HepG2 (cell line): ENCODE measurements at regions of chr17 and their contacts with region 1.

Region 1: DNA sequence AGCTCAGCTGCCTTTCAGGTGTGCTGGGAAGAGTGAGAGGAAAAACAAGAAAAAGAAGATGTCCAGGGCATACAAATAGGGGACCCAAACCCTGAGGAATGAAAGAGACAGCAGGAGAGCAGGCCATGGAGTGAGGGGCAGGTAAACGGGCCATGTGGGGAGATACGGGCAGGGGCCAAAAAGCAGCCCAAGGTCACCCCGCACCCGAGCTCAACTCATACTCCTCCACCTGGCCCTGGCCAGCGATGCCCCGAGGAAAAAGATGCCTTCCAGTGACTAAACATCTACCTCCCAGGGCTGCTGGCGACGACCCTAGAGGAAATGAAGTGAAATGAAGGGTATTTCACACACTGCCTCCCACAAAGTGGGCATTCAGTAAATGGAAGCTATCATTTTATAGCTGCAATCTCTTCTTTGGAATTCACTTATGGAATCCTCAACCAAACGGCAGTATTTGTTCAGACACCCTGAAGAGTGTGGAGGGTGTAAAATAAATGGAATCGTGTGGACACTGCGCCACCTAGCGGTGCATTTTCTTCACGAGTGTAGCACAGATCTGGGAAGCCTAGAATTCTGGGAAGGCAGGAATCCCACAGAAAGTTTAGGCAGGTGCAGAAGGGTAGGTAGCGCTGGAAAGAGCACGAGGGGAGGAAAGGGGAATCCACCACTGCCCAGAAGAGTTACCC is 14.9 kb downstream of the ELAC2 start:
- DNase-seq: peak; percentile 59
- ATAC-seq: peak; percentile 92
- H3K4me3 ChIP-seq: no peak overlapping the region
- H3K27ac ChIP-seq: no peak overlapping the region
- H3K4me1 ChIP-seq: no peaks in the 10 kb centered on the region
- H3K27me3 ChIP-seq: no peaks in the 10 kb centered on the region
- CTCF ChIP-seq: peak; percentile 88
- EP300 ChIP-seq: no peak
- POLR2A ChIP-seq: no peak
- RAD21 ChIP-seq: no peak

Region 2: DNA sequence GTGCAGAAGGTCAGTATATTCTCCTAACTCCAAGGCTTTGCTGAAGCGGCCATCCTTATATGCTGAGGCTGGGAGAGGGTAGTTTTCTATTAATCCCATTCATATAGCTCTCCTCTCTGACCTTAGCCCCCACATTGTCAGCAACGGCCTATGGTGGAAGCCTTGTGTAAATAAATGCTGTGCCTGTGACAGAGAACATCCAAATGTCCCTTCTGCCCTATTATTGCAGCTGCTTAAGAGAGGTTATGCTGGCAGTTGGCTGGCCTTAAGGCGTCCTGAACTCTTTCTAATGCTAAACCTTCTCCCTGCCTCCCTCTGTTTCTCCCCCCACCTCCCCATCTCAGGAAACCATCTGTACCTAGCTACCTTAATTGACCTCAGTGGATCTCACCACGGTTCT is 160.0 kb before region 1 on chr17:
- CTCF ChIA-PET with region 1: no interaction called
- POLR2A ChIA-PET with region 1: no interaction called
- in situ Hi-C with region 1: no loop called
- intact Hi-C with region 1: no loop called
- DNase-seq: no peak
- ATAC-seq: peak; percentile 46; the same call in 2 of the 3 replicates
- H3K4me3 ChIP-seq: no peak overlapping the region
- H3K27ac ChIP-seq: no peak overlapping the region
- H3K4me1 ChIP-seq: no peaks in the 10 kb centered on the region
- H3K27me3 ChIP-seq: no peaks in the 10 kb centered on the region
- CTCF ChIP-seq: no peak
- EP300 ChIP-seq: no peak
- POLR2A ChIP-seq: no peak
- RAD21 ChIP-seq: no peak

Region 3: DNA sequence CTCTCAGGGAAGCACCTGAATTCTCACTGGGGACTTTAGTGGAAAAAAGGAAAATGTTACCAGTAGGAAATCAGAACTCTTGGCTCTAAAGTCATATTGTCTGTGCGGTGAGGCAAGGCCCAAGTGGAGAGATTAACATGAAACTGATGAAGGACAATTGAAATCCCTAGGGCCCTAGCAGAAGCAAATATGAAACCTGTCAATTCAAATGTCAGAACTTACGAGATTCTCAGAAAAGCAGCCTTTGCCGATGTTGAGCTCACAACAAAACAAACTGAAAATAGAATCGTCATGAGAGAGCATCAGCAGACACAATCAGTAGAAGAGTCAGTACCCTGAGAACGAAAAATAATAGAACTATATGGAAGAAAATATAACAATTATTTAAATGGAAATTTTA is 93.9 kb before region 1 on chr17:
- CTCF ChIA-PET with region 1: no interaction called
- POLR2A ChIA-PET with region 1: no interaction called
- in situ Hi-C with region 1: no loop called
- intact Hi-C with region 1: no loop called
- DNase-seq: no peak
- ATAC-seq: no peak
- H3K4me3 ChIP-seq: no peak overlapping the region
- H3K27ac ChIP-seq: no peak overlapping the region
- H3K4me1 ChIP-seq: no peaks in the 10 kb centered on the region
- H3K27me3 ChIP-seq: no peaks in the 10 kb centered on the region; a peak in 1 of 5 replicates
- CTCF ChIP-seq: no peak
- EP300 ChIP-seq: no peak
- POLR2A ChIP-seq: no peak
- RAD21 ChIP-seq: no peak

Region 4: GRCh38 chr17:12928741-12929140 is 74.2 kb before region 1 on chr17:
- CTCF ChIA-PET with region 1: interaction called, 8 read pairs
- POLR2A ChIA-PET with region 1: no interaction called
- in situ Hi-C with region 1: loop called (anchors 5 kb)
- intact Hi-C with region 1: loop called (anchors 2 kb)
- DNase-seq: peak; percentile 29
- ATAC-seq: peak; percentile 73
- H3K4me3 ChIP-seq: no peak overlapping the region
- H3K27ac ChIP-seq: no peak overlapping the region
- H3K4me1 ChIP-seq: no peaks in the 10 kb centered on the region
- H3K27me3 ChIP-seq: no peaks in the 10 kb centered on the region
- CTCF ChIP-seq: peak; percentile 54
- EP300 ChIP-seq: no peak
- POLR2A ChIP-seq: no peak
- RAD21 ChIP-seq: no peak

Region 5: GRCh38 chr17:13074026-13074425 is 71.1 kb after region 1 on chr17:
- CTCF ChIA-PET with region 1: no interaction called
- POLR2A ChIA-PET with region 1: no interaction called
- in situ Hi-C with region 1: no loop called
- intact Hi-C with region 1: no loop called
- DNase-seq: no peak
- ATAC-seq: no peak
- H3K4me3 ChIP-seq: no peak overlapping the region
- H3K27ac ChIP-seq: no peak overlapping the region
- H3K4me1 ChIP-seq: no peaks in the 10 kb centered on the region
- H3K27me3 ChIP-seq: no peaks in the 10 kb centered on the region; a peak in 2 of 5 replicates
- CTCF ChIP-seq: no peak
- EP300 ChIP-seq: no peak
- POLR2A ChIP-seq: no peak
- RAD21 ChIP-seq: no peak

Region 6: GRCh38 chr17:13403982-13404946 is 401.4 kb after region 1 on chr17:
- CTCF ChIA-PET with region 1: no interaction called
- POLR2A ChIA-PET with region 1: no interaction called
- in situ Hi-C with region 1: no loop called
- intact Hi-C with region 1: no loop called
- DNase-seq: peak; percentile 84
- ATAC-seq: peak; percentile 99
- H3K4me3 ChIP-seq: peak overlapping the region; percentile 36 to 56 (median 47); a peak in 5 of 6 replicates
- H3K27ac ChIP-seq: peak overlapping the region; percentile 79
- H3K4me1 ChIP-seq: peaks cover 78% of the 10 kb centered on the region
- H3K27me3 ChIP-seq: no peaks in the 10 kb centered on the region
- CTCF ChIP-seq: no peak
- EP300 ChIP-seq: peak in 1 of 2 experiments; percentile 82; a peak in 2 of 4 replicates
- POLR2A ChIP-seq: peak; percentile 24 to 47; a peak in 2 of 4 replicates
- RAD21 ChIP-seq: no peak